ENCODE measurements at regions of chr2 and their contacts with region 1.

Region 1: DNA sequence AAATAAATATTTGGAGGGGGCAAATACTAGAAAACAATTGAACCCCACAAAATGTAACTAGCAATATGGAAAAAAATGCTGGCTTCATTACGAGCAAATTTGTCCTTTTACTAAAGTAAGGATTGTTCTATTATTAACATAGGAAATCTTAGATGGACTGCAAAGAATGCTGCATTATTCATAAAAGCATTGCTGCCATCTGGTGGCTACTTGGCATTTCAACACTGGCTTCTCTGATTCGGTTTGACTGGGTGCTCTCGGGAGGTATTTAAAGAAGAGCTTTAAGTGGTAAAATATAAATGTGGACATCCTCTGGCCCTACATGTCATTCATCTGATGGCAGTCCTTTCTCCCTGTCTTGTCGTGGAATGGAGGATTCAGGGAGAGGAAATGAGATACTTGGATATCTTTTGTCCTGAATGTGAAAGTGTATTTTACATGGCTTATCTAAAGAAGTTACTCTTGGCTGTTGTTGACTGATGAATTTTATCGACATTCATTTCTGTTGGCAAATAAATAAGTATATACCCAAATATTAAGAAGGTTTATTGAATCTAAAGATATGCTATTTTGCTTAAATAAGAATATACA is 130.2 kb downstream of the ARHGAP15 start:
- DNase-seq: peak; percentile 36
- ATAC-seq: peak; percentile 83
- H3K4me3 ChIP-seq: no peak overlapping the region
- H3K27ac ChIP-seq: no peak overlapping the region
- H3K4me1 ChIP-seq: peaks cover 17% of the 10 kb centered on the region; the same call in 1 of the 2 replicates
- H3K27me3 ChIP-seq: no peaks in the 10 kb centered on the region
- CTCF ChIP-seq: peak; percentile 68 to 73 (median 71)
- EP300 ChIP-seq: no peak
- POLR2A ChIP-seq: no peak
- RAD21 ChIP-seq: peak; percentile 87

Region 2: DNA sequence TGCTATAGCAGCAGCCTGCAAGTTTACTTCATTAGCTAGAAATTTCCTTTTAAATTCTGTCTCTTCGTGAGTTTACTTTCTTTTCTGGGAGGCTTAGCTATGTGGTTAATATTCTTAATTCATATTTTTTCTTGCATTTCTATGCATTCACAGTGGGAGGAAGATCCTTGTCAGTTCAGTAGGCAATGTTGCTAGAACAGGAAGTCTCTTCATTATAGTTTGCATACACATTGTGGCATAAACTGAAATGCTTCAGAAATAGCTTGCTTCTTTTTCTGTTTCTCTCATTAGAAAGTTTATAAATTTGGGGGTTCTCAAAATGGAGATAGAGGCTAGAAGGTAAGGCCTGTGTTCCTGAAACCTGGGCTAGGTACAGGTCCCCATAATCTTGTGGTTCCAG is 138.4 kb before region 1 on chr2:
- CTCF ChIA-PET with region 1: interaction called, 10 read pairs
- POLR2A ChIA-PET with region 1: interaction called, 3 read pairs
- RAD21 ChIA-PET with region 1: no interaction called
- SMC1A ChIA-PET with region 1: interaction called, 5 read pairs
- in situ Hi-C with region 1: no loop called
- intact Hi-C with region 1: no loop called
- DNase-seq: no peak
- ATAC-seq: peak; percentile 62
- H3K4me3 ChIP-seq: no peak overlapping the region
- H3K27ac ChIP-seq: peak overlapping the region; percentile 30
- H3K4me1 ChIP-seq: peaks cover 7% of the 10 kb centered on the region
- H3K27me3 ChIP-seq: no peaks in the 10 kb centered on the region
- CTCF ChIP-seq: no peak
- EP300 ChIP-seq: no peak
- POLR2A ChIP-seq: no peak
- RAD21 ChIP-seq: no peak

Region 3: DNA sequence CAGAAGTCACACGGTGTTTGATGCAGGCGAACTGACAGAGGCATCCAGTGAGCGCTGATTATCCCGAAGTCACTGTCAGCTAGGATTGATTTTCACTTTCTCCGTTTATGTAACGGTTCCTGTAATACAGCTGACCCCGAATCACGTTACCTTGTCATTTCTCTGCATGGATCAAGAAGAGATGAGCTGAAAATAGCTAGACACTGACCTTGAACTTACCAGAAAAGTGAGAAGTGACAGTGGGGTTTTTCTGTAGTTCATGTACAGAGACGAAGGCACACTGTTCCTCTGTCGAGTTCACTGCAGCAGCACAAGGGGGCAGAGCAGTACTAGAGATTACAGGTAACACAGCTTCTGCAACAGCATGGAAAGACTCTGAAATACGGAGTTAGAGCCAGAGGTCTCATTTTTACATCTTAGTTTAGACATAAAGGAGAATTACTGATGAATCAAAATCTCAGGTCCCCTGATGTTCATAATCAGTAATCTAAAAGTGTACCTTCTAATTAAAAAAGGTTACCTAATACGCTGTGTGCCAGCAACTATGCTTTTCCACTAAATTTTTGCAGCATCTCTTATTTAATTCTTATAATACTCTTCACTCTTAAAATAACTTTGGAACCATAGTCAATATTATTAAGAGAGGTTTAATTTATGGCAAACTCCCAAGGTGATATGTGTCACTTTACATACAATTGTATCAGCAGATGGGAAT is 97.2 kb before region 1 on chr2:
- CTCF ChIA-PET with region 1: interaction called, 82 read pairs
- POLR2A ChIA-PET with region 1: no interaction called
- RAD21 ChIA-PET with region 1: interaction called, 32 read pairs
- SMC1A ChIA-PET with region 1: interaction called, 28 read pairs
- in situ Hi-C with region 1: no loop called
- intact Hi-C with region 1: loop called (anchors 1 kb)
- DNase-seq: no peak
- ATAC-seq: peak; percentile 96
- H3K4me3 ChIP-seq: no peak overlapping the region
- H3K27ac ChIP-seq: no peak overlapping the region
- H3K4me1 ChIP-seq: peaks cover 6% of the 10 kb centered on the region
- H3K27me3 ChIP-seq: no peaks in the 10 kb centered on the region
- CTCF ChIP-seq: peak; percentile 70 to 77 (median 73); a peak in 5 of 6 replicates
- EP300 ChIP-seq: no peak
- POLR2A ChIP-seq: no peak
- RAD21 ChIP-seq: peak; percentile 96

Region 4: GRCh38 chr2:143217512-143218115 is 41.8 kb before region 1 on chr2:
- CTCF ChIA-PET with region 1: interaction called, 18 read pairs
- POLR2A ChIA-PET with region 1: no interaction called
- RAD21 ChIA-PET with region 1: interaction called, 23 read pairs
- SMC1A ChIA-PET with region 1: interaction called, 21 read pairs
- in situ Hi-C with region 1: no loop called
- intact Hi-C with region 1: loop called (anchors 2 kb)
- DNase-seq: no peak
- ATAC-seq: no peak
- H3K4me3 ChIP-seq: no peak overlapping the region
- H3K27ac ChIP-seq: no peak overlapping the region
- H3K4me1 ChIP-seq: no peaks in the 10 kb centered on the region
- H3K27me3 ChIP-seq: no peaks in the 10 kb centered on the region
- CTCF ChIP-seq: no peak
- EP300 ChIP-seq: no peak
- POLR2A ChIP-seq: no peak
- RAD21 ChIP-seq: no peak

Region 5: GRCh38 chr2:143230506-143231253 is 28.8 kb before region 1 on chr2:
- CTCF ChIA-PET with region 1: interaction called, 11 read pairs
- POLR2A ChIA-PET with region 1: no interaction called
- RAD21 ChIA-PET with region 1: interaction called, 5 read pairs
- SMC1A ChIA-PET with region 1: interaction called, 12 read pairs
- in situ Hi-C with region 1: no loop called
- intact Hi-C with region 1: no loop called
- DNase-seq: no peak
- ATAC-seq: no peak
- H3K4me3 ChIP-seq: no peak overlapping the region
- H3K27ac ChIP-seq: no peak overlapping the region
- H3K4me1 ChIP-seq: no peaks in the 10 kb centered on the region
- H3K27me3 ChIP-seq: no peaks in the 10 kb centered on the region
- CTCF ChIP-seq: no peak
- EP300 ChIP-seq: no peak
- POLR2A ChIP-seq: no peak
- RAD21 ChIP-seq: no peak

Region 6: DNA sequence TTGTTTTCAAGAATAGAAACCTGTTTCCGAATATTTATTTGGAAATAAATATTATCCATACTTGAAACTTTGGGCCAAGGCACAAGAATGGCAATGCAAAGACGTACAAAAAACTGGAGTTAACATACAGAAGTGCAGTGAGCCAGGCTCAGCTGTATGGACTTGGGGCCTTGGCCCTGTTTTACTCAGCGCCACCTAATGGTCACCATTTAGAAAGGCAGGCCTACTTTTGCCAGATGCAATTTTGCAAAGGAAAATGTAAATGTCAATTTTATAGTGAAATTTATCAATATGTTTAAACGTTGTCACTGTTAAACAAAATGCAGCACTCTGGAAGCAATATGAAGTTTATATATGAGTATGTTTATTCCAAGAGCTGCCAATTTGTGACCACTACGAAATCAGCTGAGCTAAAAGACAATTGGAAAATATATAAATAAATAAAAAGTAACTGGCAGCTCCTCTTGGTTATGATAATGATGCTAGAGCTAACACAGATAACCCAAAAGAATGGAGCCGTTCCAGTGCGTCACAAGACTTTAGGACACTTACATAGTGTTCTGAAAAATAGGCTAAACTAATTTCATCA is 24.7 kb after region 1 on chr2:
- CTCF ChIA-PET with region 1: interaction called, 73 read pairs
- POLR2A ChIA-PET with region 1: no interaction called
- RAD21 ChIA-PET with region 1: interaction called, 5 read pairs
- SMC1A ChIA-PET with region 1: interaction called, 5 read pairs
- in situ Hi-C with region 1: no loop called
- intact Hi-C with region 1: no loop called
- DNase-seq: no peak
- ATAC-seq: peak; percentile 88
- H3K4me3 ChIP-seq: no peak overlapping the region
- H3K27ac ChIP-seq: no peak overlapping the region
- H3K4me1 ChIP-seq: no peaks in the 10 kb centered on the region
- H3K27me3 ChIP-seq: no peaks in the 10 kb centered on the region
- CTCF ChIP-seq: peak; percentile 57 to 85 (median 77)
- EP300 ChIP-seq: no peak
- POLR2A ChIP-seq: no peak
- RAD21 ChIP-seq: peak; percentile 35; the same call in 1 of the 2 replicates

Region 7: GRCh38 chr2:143451642-143452281 is 192.3 kb after region 1 on chr2:
- CTCF ChIA-PET with region 1: no interaction called
- POLR2A ChIA-PET with region 1: no interaction called
- RAD21 ChIA-PET with region 1: no interaction called
- SMC1A ChIA-PET with region 1: no interaction called
- in situ Hi-C with region 1: no loop called
- intact Hi-C with region 1: no loop called
- DNase-seq: no peak
- ATAC-seq: peak; percentile 76
- H3K4me3 ChIP-seq: no peak overlapping the region
- H3K27ac ChIP-seq: no peak overlapping the region
- H3K4me1 ChIP-seq: no peaks in the 10 kb centered on the region
- H3K27me3 ChIP-seq: no peaks in the 10 kb centered on the region
- CTCF ChIP-seq: no peak
- EP300 ChIP-seq: no peak
- POLR2A ChIP-seq: no peak
- RAD21 ChIP-seq: no peak